Mammary epithelial cell (primary cell): ENCODE measurements at regions of chr1 and their contacts with region 1.

Region 1: DNA sequence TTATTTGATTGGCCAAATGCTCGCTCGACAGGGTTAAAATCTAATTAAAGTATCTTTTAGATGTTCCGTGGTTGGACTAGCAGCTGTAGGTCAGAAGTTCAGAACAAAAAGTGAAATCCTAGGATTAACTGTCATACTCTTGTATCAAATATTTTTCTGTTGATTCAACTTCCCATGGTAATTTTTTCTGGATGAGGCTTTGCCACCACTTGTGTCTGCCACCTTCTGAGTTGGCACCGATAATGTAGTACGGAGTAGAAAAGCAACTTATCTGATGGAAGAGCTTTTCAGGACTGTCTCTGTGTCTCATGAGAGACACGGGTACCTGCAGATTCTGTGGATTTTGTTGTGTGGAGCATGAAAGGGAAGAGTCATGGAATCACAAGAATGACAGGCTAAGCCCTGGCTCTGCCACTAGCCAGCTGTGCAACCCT is 44.6 kb upstream of the CNN3 start:
- DNase-seq: peak; percentile 74
- H3K4me3 ChIP-seq: peak overlapping the region in 1 of 3 experiments; percentile 25
- H3K27ac ChIP-seq: peak overlapping the region; percentile 40
- H3K4me1 ChIP-seq: peaks cover 30% of the 10 kb centered on the region
- H3K27me3 ChIP-seq: no peaks in the 10 kb centered on the region
- CTCF ChIP-seq: no peak

Region 2: DNA sequence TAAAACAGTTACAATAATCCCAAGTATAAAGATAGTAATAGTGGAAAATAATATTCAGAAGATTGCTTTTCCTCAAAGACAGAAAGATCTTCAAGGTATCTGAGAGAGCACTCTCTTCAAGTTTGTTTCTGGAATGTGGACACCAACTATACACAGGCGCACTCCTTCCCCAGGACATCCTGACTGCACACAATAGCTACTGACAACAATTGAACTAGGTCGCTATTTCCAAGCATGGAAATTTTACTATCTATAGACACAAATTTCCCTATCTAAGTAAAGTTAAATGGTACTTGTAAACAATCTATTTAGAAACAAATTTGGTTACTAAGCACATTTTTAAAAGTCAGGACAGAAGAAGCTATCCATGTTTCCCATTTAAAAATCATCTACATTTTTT is 753.2 kb before region 1 on chr1:
- CTCF ChIA-PET with region 1: no interaction called
- dilution Hi-C with region 1: no loop called
- in situ Hi-C with region 1: no loop called
- intact Hi-C with region 1: no loop called
- DNase-seq: no peak
- H3K4me3 ChIP-seq: no peak overlapping the region
- H3K27ac ChIP-seq: no peak overlapping the region
- H3K4me1 ChIP-seq: peaks cover 3% of the 10 kb centered on the region
- H3K27me3 ChIP-seq: no peaks in the 10 kb centered on the region
- CTCF ChIP-seq: no peak

Region 3: GRCh38 chr1:94884106-94884505 is 87.4 kb before region 1 on chr1:
- CTCF ChIA-PET with region 1: no interaction called
- dilution Hi-C with region 1: no loop called
- in situ Hi-C with region 1: no loop called
- intact Hi-C with region 1: no loop called
- DNase-seq: peak; percentile 43
- H3K4me3 ChIP-seq: no peak overlapping the region
- H3K27ac ChIP-seq: peak overlapping the region; percentile 3
- H3K4me1 ChIP-seq: peaks cover 12% of the 10 kb centered on the region
- H3K27me3 ChIP-seq: no peaks in the 10 kb centered on the region
- CTCF ChIP-seq: no peak

Region 4: DNA sequence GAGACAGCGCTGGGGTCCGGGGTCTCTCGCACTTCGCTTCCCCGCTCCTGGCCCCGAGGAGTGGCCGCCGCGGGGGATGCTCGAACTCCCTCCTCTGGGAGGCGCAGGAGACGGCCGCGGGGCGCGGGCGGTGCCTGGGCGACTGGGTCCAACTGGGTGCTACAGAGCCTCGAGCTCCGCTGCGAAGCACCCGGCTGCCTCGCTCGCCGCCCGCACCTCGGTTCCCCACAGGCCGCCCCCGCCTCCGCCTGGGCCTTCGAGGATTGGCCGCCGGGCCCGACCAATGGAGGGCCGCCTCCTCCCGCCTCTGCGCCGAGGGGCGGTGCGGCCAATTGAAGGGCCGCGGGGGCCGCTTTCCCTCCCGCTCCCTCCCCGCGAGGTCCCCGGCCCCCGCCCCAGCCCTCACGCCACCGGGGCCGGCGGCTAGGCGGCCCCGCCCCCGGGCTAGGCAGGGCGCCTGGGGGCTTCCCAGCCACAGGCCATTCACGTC is 44.5 kb before region 1 on chr1 and contains the start of gene CNN3:
- CTCF ChIA-PET with region 1: no interaction called
- dilution Hi-C with region 1: no loop called
- in situ Hi-C with region 1: no loop called
- intact Hi-C with region 1: loop called (anchors 5 kb)
- DNase-seq: peak; percentile 92
- H3K4me3 ChIP-seq: peak within 1 kb of the TSS; percentile 75 to 83 (median 79)
- H3K27ac ChIP-seq: peak within 1 kb of the TSS; percentile 79
- H3K4me1 ChIP-seq: peaks cover 24% of the 10 kb centered on the region
- H3K27me3 ChIP-seq: no peaks in the 10 kb centered on the region
- CTCF ChIP-seq: no peak
- total RNA-seq, gene CNN3: 136 to 244 TPM

Region 5: GRCh38 chr1:95770581-95770980 is 799.1 kb after region 1 on chr1:
- CTCF ChIA-PET with region 1: no interaction called
- dilution Hi-C with region 1: no loop called
- in situ Hi-C with region 1: no loop called
- intact Hi-C with region 1: no loop called
- DNase-seq: no peak
- H3K4me3 ChIP-seq: no peak overlapping the region
- H3K27ac ChIP-seq: no peak overlapping the region
- H3K4me1 ChIP-seq: no peaks in the 10 kb centered on the region
- H3K27me3 ChIP-seq: no peaks in the 10 kb centered on the region
- CTCF ChIP-seq: no peak